Natural killer cell (primary cell): ENCODE measurements at regions of chr6 and their contacts with region 1.

Region 1: GRCh38 chr6:159693128-159693893 is at the start of gene SOD2:
- DNase-seq: peak; percentile 83 to 90
- ATAC-seq: peak; percentile 83 to 88 (median 84)
- H3K4me3 ChIP-seq: peak within 1 kb of the TSS; percentile 58
- H3K4me3 Mint-ChIP-seq: peak within 1 kb of the TSS; percentile 90
- H3K27ac ChIP-seq: peak within 1 kb of the TSS; percentile 88
- H3K27ac Mint-ChIP-seq: peak within 1 kb of the TSS; percentile 58 to 90
- H3K4me1 ChIP-seq: peaks cover 26% of the 10 kb centered on the region
- H3K4me1 Mint-ChIP-seq: peaks cover 32 to 36% of the 10 kb centered on the region in 2 donors
- H3K27me3 ChIP-seq: no peaks in the 10 kb centered on the region
- H3K27me3 Mint-ChIP-seq: no peaks in the 10 kb centered on the region
- CTCF ChIP-seq: no peak
- total RNA-seq, gene SOD2: 81.3 to 156 (median 138) TPM

Region 2: DNA sequence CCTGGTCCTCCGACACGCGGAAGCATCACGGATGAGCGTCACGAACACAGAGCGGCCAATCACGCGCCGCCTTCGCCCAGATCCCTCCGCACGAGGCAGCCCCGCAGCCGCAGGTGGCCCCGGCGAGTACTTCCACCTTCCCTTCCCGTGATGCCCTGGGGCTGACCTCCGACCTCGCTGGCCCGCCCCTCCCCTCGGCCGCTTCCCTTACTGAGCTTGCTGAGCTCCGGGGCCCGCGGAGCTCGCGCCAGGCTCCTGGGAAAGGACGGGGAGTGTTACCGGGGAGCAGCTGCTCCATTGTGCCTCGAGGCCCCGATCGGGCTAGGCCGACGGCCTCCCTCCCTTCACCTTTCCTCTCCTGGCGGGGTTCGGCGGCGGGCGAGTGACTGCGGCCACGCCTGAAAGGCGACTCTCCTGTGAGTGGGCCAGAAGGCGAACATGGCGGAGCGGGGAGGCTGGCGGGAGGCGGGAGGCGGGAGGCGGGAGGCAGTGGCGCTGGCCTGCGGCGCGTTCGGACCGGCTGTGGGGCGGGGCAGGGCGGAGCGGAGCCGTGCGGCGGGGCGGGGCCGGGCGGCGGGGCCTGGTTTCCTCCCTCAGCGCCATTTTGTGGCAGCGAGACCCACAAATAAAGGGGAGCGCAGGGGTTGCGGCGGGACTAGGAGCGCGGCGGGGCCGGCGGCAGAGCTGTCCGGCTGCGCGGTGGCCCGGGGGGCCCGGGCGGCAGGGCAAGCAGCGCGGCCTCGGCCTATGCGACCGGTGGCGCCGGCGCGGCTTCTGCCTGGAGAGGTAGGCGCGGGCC is 33.8 kb after region 1 on chr6 and contains the start of gene WTAP:
- intact Hi-C with region 1: loop called (anchors 2 kb)
- DNase-seq: peak; percentile 92 to 99
- ATAC-seq: peak; percentile 85 to 94 (median 85)
- H3K4me3 ChIP-seq: peak within 1 kb of the TSS; percentile 92
- H3K4me3 Mint-ChIP-seq: peak within 1 kb of the TSS; percentile 94
- H3K27ac ChIP-seq: peak within 1 kb of the TSS; percentile 95
- H3K27ac Mint-ChIP-seq: peak within 1 kb of the TSS; percentile 97 to 98
- H3K4me1 ChIP-seq: peaks cover 14% of the 10 kb centered on the region
- H3K4me1 Mint-ChIP-seq: peaks cover 32 to 52% of the 10 kb centered on the region in 2 donors
- H3K27me3 ChIP-seq: no peaks in the 10 kb centered on the region
- H3K27me3 Mint-ChIP-seq: no peaks in the 10 kb centered on the region
- CTCF ChIP-seq: no peak
- total RNA-seq, gene WTAP: 141 to 167 (median 164) TPM

Region 3: GRCh38 chr6:159761873-159762680 is 68.8 kb after region 1 on chr6 and contains the start of gene ACAT2:
- intact Hi-C with region 1: loop called (anchors 1 kb)
- DNase-seq: peak; percentile 89 to 97
- ATAC-seq: peak; percentile 83 to 93 (median 84)
- H3K4me3 ChIP-seq: peak within 1 kb of the TSS; percentile 98
- H3K4me3 Mint-ChIP-seq: peak within 1 kb of the TSS; percentile 94
- H3K27ac ChIP-seq: peak within 1 kb of the TSS; percentile 98
- H3K27ac Mint-ChIP-seq: peak within 1 kb of the TSS; percentile 64 to 99
- H3K4me1 ChIP-seq: peaks cover 14% of the 10 kb centered on the region
- H3K4me1 Mint-ChIP-seq: peaks cover 30 to 31% of the 10 kb centered on the region in 2 donors
- H3K27me3 ChIP-seq: no peaks in the 10 kb centered on the region
- H3K27me3 Mint-ChIP-seq: no peaks in the 10 kb centered on the region
- CTCF ChIP-seq: no peak
- total RNA-seq, gene ACAT2: 21.7 to 31.7 (median 26.5) TPM

Region 4: GRCh38 chr6:159852877-159853276 is 159.6 kb after region 1 on chr6:
- intact Hi-C with region 1: loop called (anchors 10 kb)
- DNase-seq: peak in 1 of 2 donors; percentile 55
- ATAC-seq: peak in 1 of 3 donors; percentile 50
- H3K4me3 ChIP-seq: no peak overlapping the region
- H3K4me3 Mint-ChIP-seq: no peak overlapping the region
- H3K27ac ChIP-seq: no peak overlapping the region
- H3K27ac Mint-ChIP-seq: no peak overlapping the region
- H3K4me1 ChIP-seq: peaks cover 6% of the 10 kb centered on the region
- H3K4me1 Mint-ChIP-seq: no peaks in the 10 kb centered on the region
- H3K27me3 ChIP-seq: no peaks in the 10 kb centered on the region
- H3K27me3 Mint-ChIP-seq: peaks cover 15 to 26% of the 10 kb centered on the region in 2 donors
- CTCF ChIP-seq: no peak

Region 5: GRCh38 chr6:159969921-159970320 is 276.6 kb after region 1 on chr6:
- intact Hi-C with region 1: loop called (anchors 10 kb)
- DNase-seq: peak; percentile 41 to 61
- ATAC-seq: peak; percentile 19 to 44 (median 43)
- H3K4me3 ChIP-seq: peak overlapping the region; percentile 64
- H3K4me3 Mint-ChIP-seq: peak overlapping the region; percentile 96
- H3K27ac ChIP-seq: peak overlapping the region; percentile 62
- H3K27ac Mint-ChIP-seq: peak overlapping the region; percentile 94 to 99
- H3K4me1 ChIP-seq: peaks cover 43% of the 10 kb centered on the region
- H3K4me1 Mint-ChIP-seq: peaks cover 47 to 48% of the 10 kb centered on the region in 2 donors
- H3K27me3 ChIP-seq: no peaks in the 10 kb centered on the region
- H3K27me3 Mint-ChIP-seq: no peaks in the 10 kb centered on the region
- CTCF ChIP-seq: no peak